HCT116 (cell line): ENCODE measurements at regions of chr2 and their contacts with region 1.

Region 1: GRCh38 chr2:230160112-230160660 is 59.6 kb downstream of the SP110 start:
- DNase-seq: peak; percentile 26
- ATAC-seq: peak; percentile 80
- H3K4me3 ChIP-seq: no peak overlapping the region
- H3K27ac ChIP-seq: no peak overlapping the region
- H3K4me1 ChIP-seq: no peaks in the 10 kb centered on the region
- H3K27me3 ChIP-seq: no peaks in the 10 kb centered on the region
- CTCF ChIP-seq: peak; percentile 76 to 82 (median 82); a peak in 5 of 6 replicates
- POLR2A ChIP-seq: no peak
- RAD21 ChIP-seq: peak; percentile 83

Region 2: DNA sequence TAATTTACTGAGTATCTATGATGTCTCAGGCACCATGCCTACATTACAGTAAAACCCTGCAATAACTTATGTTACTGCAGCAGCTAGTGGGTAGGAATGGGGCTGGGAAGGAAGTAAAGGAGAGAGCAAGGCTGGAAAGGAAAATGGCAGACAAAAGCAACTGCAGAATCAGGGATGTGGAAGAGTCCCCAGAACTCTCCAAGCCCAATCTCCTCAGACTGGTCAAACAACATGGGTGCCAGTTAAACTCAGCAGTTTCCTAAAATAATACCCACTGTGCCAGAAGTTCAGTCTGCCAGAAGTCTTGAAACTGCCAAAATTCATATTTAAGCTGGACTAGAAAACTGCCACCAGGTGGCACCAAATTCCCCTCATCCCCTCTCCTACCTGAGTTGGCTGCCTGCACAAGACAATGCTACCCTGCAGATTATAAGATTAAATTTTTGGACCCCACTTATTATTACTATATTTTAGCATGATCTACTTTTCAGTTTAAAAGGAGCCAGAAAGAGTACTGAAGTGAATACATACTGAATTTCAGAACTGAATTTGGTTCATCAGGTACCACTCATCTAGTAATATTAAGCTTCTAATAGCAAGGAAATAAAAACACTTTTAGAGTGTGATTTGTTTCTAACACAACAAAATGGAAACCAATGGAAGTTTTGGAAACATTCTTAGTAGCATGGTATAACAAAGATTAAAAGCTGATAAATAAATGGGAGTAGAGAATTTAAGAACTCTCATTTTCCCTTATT is 359.0 kb before region 1 on chr2:
- CTCF ChIA-PET with region 1: interaction called, 3 read pairs
- POLR2A ChIA-PET with region 1: no interaction called
- RAD21 ChIA-PET with region 1: interaction called, 3 to 5 read pairs
- intact Hi-C with region 1: loop called (anchors 10 kb)
- DNase-seq: peak; percentile 58
- ATAC-seq: peak; percentile 81
- H3K4me3 ChIP-seq: no peak overlapping the region
- H3K27ac ChIP-seq: peak overlapping the region; percentile 15; the same call in 1 of the 2 replicates
- H3K4me1 ChIP-seq: no peaks in the 10 kb centered on the region
- H3K27me3 ChIP-seq: no peaks in the 10 kb centered on the region
- CTCF ChIP-seq: peak; percentile 49 to 78 (median 70); a peak in 5 of 6 replicates
- POLR2A ChIP-seq: no peak
- RAD21 ChIP-seq: peak; percentile 78

Region 3: DNA sequence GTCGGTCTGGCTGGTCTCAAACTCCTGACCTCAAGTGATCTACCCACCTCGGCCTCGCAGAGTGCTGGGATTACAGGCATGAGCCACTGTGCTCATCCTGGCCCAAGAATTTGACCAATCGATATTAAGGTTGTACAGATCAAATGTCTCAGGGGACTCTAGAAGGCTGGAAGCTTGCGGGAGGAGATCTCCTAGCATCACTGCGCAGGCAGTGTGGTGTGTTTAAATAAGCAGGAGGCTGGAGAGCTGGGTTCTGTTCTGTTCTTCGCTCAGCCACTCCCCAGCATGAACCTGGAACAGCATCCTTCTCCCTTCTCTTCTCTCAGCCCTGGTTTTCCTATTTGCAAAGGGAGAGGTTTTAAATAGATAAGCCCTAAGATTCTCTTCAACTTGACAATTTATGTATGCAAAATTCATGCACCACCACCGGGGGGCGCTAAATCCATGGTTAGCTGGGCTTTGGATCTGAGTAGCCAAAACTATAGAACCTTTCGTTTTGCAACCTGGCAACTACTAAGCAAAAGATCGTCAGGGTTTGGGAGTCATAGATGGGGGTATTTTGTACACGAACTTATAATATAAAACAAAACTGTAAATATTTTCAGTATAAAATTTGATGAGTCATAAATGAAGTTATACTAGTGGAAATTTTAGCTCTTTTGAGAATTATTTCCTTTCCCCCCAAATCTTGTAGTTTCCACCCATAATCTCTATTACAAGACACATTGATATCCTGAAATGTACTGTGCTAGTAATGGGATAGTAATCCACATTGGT is 152.1 kb before region 1 on chr2:
- CTCF ChIA-PET with region 1: interaction called, 30 read pairs
- POLR2A ChIA-PET with region 1: no interaction called
- RAD21 ChIA-PET with region 1: interaction called, 4 to 5 read pairs
- intact Hi-C with region 1: loop called (anchors 1 kb)
- DNase-seq: peak; percentile 46
- ATAC-seq: peak; percentile 80
- H3K4me3 ChIP-seq: no peak overlapping the region
- H3K27ac ChIP-seq: no peak overlapping the region
- H3K4me1 ChIP-seq: peaks cover 2 to 7% of the 10 kb centered on the region in 2 experiments; a peak in 2 of 4 replicates
- H3K27me3 ChIP-seq: no peaks in the 10 kb centered on the region
- CTCF ChIP-seq: peak; percentile 75 to 93 (median 88)
- POLR2A ChIP-seq: no peak
- RAD21 ChIP-seq: peak; percentile 92

Region 4: DNA sequence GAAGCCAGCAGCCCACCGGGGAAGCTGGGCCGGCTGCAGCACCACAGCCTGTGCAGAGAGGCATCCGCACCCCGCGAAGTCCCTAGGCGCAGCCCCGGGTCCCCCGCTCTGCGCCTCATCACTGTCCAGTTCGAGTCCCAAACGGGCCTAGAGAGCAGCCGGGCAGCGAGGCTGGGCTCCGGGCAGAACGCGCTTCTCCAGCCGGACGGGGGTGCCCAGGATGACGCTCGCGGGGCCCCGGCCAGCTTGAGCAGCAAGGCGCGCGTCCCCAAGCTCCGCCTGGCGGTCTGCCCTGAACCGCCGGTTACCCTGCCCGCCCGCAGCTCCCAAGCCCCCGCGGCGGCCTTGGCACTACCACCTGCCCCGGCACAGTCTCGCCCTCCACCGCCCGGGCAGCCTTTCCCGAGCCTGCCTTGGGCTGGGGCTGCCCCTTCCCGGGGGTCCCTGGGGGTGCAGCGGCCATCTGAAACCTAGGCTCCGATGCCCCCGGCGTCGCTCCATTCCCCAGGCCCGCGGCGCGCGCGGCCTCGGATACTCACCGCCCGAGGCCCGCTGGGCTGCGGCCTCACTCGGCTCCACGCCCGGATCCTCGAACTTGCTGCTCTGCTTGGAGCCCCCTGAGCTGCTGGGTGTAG is 92.1 kb before region 1 on chr2:
- CTCF ChIA-PET with region 1: interaction called, 31 read pairs
- POLR2A ChIA-PET with region 1: no interaction called
- RAD21 ChIA-PET with region 1: interaction called, 4 to 5 read pairs
- intact Hi-C with region 1: loop called (anchors 1 kb)
- DNase-seq: no peak
- ATAC-seq: peak; percentile 64
- H3K4me3 ChIP-seq: peak overlapping the region; percentile 74 to 82
- H3K27ac ChIP-seq: peak overlapping the region; percentile 76
- H3K4me1 ChIP-seq: peaks cover 0 to 18% of the 10 kb centered on the region in 2 experiments; a peak in 3 of 4 replicates
- H3K27me3 ChIP-seq: no peaks in the 10 kb centered on the region
- CTCF ChIP-seq: peak in 1 of 3 experiments; percentile 23; a peak in 1 of 6 replicates
- POLR2A ChIP-seq: no peak
- RAD21 ChIP-seq: no peak

Region 5: GRCh38 chr2:230170532-230170931 is 10.3 kb after region 1 on chr2:
- CTCF ChIA-PET with region 1: interaction called, 22 read pairs
- POLR2A ChIA-PET with region 1: no interaction called
- RAD21 ChIA-PET with region 1: no interaction called
- intact Hi-C with region 1: no loop called
- DNase-seq: no peak
- ATAC-seq: no peak
- H3K4me3 ChIP-seq: no peak overlapping the region
- H3K27ac ChIP-seq: no peak overlapping the region
- H3K4me1 ChIP-seq: no peaks in the 10 kb centered on the region
- H3K27me3 ChIP-seq: no peaks in the 10 kb centered on the region
- CTCF ChIP-seq: no peak
- POLR2A ChIP-seq: no peak
- RAD21 ChIP-seq: no peak

Region 6: GRCh38 chr2:230400454-230400853 is 240.3 kb after region 1 on chr2:
- CTCF ChIA-PET with region 1: no interaction called
- POLR2A ChIA-PET with region 1: no interaction called
- RAD21 ChIA-PET with region 1: no interaction called
- intact Hi-C with region 1: no loop called
- DNase-seq: no peak
- ATAC-seq: no peak
- H3K4me3 ChIP-seq: no peak overlapping the region
- H3K27ac ChIP-seq: no peak overlapping the region
- H3K4me1 ChIP-seq: no peaks in the 10 kb centered on the region
- H3K27me3 ChIP-seq: no peaks in the 10 kb centered on the region
- CTCF ChIP-seq: no peak
- POLR2A ChIP-seq: no peak
- RAD21 ChIP-seq: no peak